Tibial artery (tissue), 4 donors: ENCODE measurements at regions of chr19 and their contacts with region 1.

Region 1: GRCh38 chr19:12162882-12163806 is at the start of gene ZNF136:
- DNase-seq: peak; percentile 92 to 98
- H3K4me3 ChIP-seq: peak within 1 kb of the TSS; percentile 73 to 95
- H3K27ac ChIP-seq: peak within 1 kb of the TSS; percentile 93 to 96
- H3K4me1 ChIP-seq: peaks cover 0 to 40% (median 26%) of the 10 kb centered on the region in 4 donors
- H3K27me3 ChIP-seq: no peaks in the 10 kb centered on the region
- CTCF ChIP-seq: no peak

Region 2: GRCh38 chr19:12294249-12295158 is 131.4 kb after region 1 on chr19 and contains the start of gene ZNF44:
- intact Hi-C with region 1: loop called (anchors 10 kb)
- DNase-seq: peak; percentile 99
- H3K4me3 ChIP-seq: peak within 1 kb of the TSS; percentile 96 to 97
- H3K27ac ChIP-seq: peak within 1 kb of the TSS; percentile 95 to 96
- H3K4me1 ChIP-seq: peaks cover 0 to 35% (median 19%) of the 10 kb centered on the region in 4 donors
- H3K27me3 ChIP-seq: no peaks in the 10 kb centered on the region
- CTCF ChIP-seq: no peak